CD14-positive monocyte (primary cell): ENCODE measurements at regions of chr7 and their contacts with region 1.

Region 1: GRCh38 chr7:12067141-12067831 is 143.8 kb upstream of the TMEM106B start:
- DNase-seq: peak in 2 of 3 donors; percentile 18 to 42
- H3K4me3 ChIP-seq: no peak overlapping the region
- H3K4me3 Mint-ChIP-seq: no peak overlapping the region
- H3K27ac ChIP-seq: peak overlapping the region in 1 of 2 donors; percentile 50
- H3K27ac Mint-ChIP-seq: peak overlapping the region in 4 of 7 donors; percentile 17 to 83 (median 58)
- H3K4me1 ChIP-seq: peaks cover 0 to 2% of the 10 kb centered on the region in 2 donors
- H3K4me1 Mint-ChIP-seq: peaks cover 14% of the 10 kb centered on the region
- H3K27me3 ChIP-seq: no peaks in the 10 kb centered on the region
- H3K27me3 Mint-ChIP-seq: peaks cover 0 to 2% (median 0%) of the 10 kb centered on the region in 3 donors
- CTCF ChIP-seq: peak; percentile 34

Region 2: DNA sequence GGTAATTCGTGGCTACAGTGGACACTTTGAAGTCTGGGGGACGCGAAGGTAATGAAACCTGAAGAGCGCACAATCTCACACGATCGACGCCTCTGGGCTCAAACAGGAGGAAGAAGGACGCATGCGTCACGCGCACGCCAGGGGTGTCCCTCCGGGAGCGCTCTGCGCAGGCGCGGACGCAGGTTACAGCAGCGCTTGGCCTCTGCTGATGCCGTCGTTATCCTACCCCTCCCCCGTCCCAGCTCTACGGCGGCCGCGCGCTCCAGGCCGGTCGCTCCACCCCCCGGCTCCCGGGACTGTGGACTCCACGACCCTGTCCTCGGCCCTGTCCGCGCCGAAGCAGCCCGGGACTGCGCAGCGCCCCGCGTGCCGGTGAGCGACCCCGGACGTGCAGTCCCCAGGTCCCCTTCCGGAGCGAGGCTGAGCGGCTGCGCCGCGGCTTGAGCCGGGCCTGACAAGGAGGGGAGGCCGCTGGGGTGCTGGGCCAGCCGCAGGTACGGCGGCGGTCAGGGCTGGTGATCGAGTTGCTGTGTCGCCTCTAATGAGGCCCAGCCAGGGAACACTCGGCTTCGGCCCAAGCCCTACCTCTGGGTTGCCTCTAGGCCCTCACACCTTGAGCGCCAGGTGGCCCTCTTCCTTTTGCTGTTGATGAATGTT is 143.9 kb after region 1 on chr7 and contains the start of gene TMEM106B:
- intact Hi-C with region 1: loop called in 1 of 2 experiments (anchors 10 kb)
- DNase-seq: peak; percentile 95 to 98 (median 97)
- H3K4me3 ChIP-seq: peak within 1 kb of the TSS; percentile 77 to 94 (median 80)
- H3K4me3 Mint-ChIP-seq: peak within 1 kb of the TSS; percentile 83 to 99
- H3K27ac ChIP-seq: peak within 1 kb of the TSS; percentile 70 to 92
- H3K27ac Mint-ChIP-seq: peak within 1 kb of the TSS; percentile 87 to 97 (median 94)
- H3K4me1 ChIP-seq: peaks cover 9 to 15% of the 10 kb centered on the region in 2 donors
- H3K4me1 Mint-ChIP-seq: peaks cover 19% of the 10 kb centered on the region
- H3K27me3 ChIP-seq: peaks cover 17 to 24% of the 10 kb centered on the region in 2 donors
- H3K27me3 Mint-ChIP-seq: peaks cover 14 to 27% (median 20%) of the 10 kb centered on the region in 3 donors
- CTCF ChIP-seq: no peak
- polyA plus RNA-seq, gene TMEM106B: 5.2 to 17.7 (median 11.6) TPM

Region 3: DNA sequence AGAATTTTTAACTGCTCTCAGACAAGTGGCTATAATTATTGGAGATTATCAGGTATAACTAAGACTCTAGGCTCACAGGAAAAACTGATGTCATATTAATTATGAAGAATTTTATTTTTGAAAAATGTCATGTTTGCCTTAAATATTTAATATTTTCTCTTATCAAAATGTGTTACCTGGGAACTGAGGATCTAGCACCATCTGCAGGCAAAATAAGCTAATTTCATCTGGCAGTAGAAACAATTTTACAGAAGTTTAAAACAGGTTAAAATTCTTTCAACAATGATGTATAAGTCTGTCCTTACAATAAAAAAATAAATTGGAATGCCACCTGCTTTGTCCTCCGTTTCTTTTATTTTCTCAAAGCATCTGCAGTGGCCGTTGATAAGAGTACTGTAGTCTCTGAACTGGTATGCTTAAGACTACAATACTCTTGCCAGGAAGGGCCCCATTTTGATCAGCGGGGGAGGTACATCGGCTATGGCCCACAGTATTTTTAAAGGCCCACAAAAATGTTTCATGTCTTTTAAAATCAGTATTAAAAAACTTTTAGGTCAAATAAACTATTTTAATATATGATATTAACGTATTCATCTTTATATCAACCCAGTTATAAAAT is 255.1 kb after region 1 on chr7:
- intact Hi-C with region 1: loop called in 1 of 2 experiments (anchors 10 kb)
- DNase-seq: peak in 1 of 3 donors; percentile 1
- H3K4me3 ChIP-seq: no peak overlapping the region
- H3K4me3 Mint-ChIP-seq: no peak overlapping the region
- H3K27ac ChIP-seq: no peak overlapping the region
- H3K27ac Mint-ChIP-seq: no peak overlapping the region
- H3K4me1 ChIP-seq: no peaks in the 10 kb centered on the region
- H3K4me1 Mint-ChIP-seq: no peaks in the 10 kb centered on the region
- H3K27me3 ChIP-seq: no peaks in the 10 kb centered on the region
- H3K27me3 Mint-ChIP-seq: no peaks in the 10 kb centered on the region
- CTCF ChIP-seq: peak; percentile 68